OCI-LY7 (cell line): ENCODE measurements at regions of chr13 and their contacts with region 1.

Region 1: GRCh38 chr13:98445340-98446233 is 131.3 kb downstream of the STK24 start:
- DNase-seq: peak; percentile 67
- H3K4me3 ChIP-seq: no peak overlapping the region
- H3K27ac ChIP-seq: no peak overlapping the region
- H3K4me1 ChIP-seq: peaks cover 20% of the 10 kb centered on the region
- CTCF ChIP-seq: peak; percentile 75

Region 2: DNA sequence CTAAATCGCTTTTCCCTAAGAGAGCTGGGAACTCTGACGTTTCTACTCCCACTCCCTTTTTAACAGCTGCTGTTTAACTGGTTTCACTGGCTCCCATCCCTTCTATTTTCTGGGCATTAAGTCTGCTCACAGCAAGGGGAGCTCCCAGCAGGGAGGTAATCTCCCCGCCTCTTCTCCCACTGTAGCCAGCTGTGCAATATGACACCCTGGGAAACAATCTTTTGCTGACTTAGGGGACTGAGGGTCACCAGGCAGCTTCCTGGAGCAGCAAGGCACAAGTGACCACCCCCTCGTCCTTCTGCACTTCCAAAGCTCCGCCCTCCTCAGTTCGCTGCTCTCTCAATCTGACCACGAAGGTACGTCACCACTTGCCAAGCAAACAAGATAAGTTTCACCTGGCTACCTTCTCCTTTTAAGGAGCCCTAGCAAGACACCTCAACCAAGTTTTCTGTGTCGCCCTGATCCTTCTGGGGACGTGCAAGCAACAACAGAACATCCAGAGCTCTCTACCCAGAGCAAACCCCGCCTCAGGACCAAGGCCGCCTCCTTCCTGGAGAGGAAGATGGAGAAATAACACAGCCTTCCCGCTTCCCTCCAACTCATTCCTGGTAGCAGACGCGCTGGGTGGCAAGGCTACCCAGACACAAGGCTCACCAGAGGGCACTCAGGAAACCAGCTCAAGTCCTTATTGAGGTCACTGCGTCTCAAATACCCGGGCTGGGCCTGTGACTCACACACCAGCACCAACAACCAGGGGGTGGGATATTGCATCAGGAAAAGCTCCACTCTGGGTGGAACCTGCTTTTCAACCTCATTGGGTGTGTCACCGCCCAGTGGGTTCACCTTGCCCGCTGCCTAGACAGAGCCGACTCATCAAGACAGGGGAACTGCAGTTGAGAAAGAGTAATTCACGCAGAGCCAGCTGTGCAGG is 39.0 kb after region 1 on chr13:
- CTCF ChIA-PET with region 1: interaction called, 3 read pairs
- POLR2A ChIA-PET with region 1: no interaction called
- intact Hi-C with region 1: loop called (anchors 5 kb)
- DNase-seq: no peak
- H3K4me3 ChIP-seq: no peak overlapping the region
- H3K27ac ChIP-seq: no peak overlapping the region
- H3K4me1 ChIP-seq: peaks cover 47% of the 10 kb centered on the region
- CTCF ChIP-seq: no peak

Region 3: DNA sequence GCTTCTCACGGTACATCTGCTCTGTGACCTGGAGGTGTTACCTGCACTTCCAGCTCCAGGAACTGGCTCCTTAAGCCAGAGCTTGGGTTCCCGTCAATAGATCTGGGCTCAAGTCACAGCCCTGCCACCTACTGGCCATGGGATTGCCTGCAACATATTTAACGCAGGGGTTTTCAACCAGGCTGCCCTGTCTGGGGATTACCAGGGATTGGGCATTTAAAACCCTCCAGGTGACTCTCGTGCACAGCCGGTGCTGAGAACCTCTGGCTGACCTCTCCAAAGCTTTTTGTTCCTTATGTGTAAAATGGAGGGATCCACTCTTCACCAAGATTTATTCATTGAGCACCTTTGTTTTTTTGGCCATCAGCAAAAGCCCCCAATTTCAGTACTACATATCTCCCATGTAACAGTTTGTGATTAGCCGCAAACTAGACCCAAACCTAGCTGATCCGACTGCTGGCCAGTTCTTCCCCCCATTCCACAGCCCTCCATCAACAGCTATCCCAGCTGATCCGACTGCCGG is 207.9 kb after region 1 on chr13:
- CTCF ChIA-PET with region 1: interaction called, 6 read pairs
- POLR2A ChIA-PET with region 1: interaction called, 3 read pairs
- intact Hi-C with region 1: loop called (anchors 1 kb)
- DNase-seq: peak; percentile 67
- H3K4me3 ChIP-seq: no peak overlapping the region
- H3K27ac ChIP-seq: no peak overlapping the region
- H3K4me1 ChIP-seq: no peaks in the 10 kb centered on the region
- CTCF ChIP-seq: peak; percentile 78

Region 4: DNA sequence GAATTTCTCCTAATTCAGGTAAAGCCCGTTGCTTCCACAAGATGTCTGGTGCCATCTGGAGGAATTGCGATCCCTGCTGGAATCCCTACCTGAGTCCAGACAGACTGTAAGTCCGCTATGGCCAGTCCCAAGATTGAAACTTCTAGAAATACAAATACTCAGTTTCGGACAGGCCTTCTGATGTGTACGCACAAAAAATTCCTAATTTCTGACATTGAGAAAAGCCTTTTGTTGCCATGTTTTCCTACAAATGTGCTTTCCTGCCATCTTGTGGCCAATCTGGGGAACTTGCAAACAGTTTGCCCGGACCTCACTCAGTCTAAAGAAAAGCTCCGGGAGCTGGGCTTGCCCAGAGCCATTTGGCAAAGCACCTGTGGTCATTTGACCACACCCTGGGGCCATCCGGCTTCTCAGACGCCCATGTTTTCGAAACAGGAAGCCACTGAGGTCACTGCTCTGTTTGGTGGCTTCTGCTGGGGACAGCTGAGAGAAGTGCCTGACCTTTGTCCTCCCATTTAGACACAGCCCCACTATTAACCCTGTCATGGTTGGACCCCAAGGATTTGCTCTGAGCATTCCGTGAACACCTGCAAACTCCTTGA is 227.5 kb after region 1 on chr13:
- CTCF ChIA-PET with region 1: no interaction called
- POLR2A ChIA-PET with region 1: no interaction called
- intact Hi-C with region 1: loop called (anchors 1 kb)
- DNase-seq: peak; percentile 56
- H3K4me3 ChIP-seq: no peak overlapping the region
- H3K27ac ChIP-seq: no peak overlapping the region
- H3K4me1 ChIP-seq: no peaks in the 10 kb centered on the region
- CTCF ChIP-seq: peak; percentile 82

Region 5: GRCh38 chr13:98826146-98826545 is 380.6 kb after region 1 on chr13:
- CTCF ChIA-PET with region 1: no interaction called
- POLR2A ChIA-PET with region 1: no interaction called
- intact Hi-C with region 1: loop called (anchors 5 kb)
- DNase-seq: peak; percentile 1
- H3K4me3 ChIP-seq: peak overlapping the region; percentile 23
- H3K27ac ChIP-seq: peak overlapping the region; percentile 13
- H3K4me1 ChIP-seq: peaks cover 15% of the 10 kb centered on the region
- CTCF ChIP-seq: no peak

Region 6: GRCh38 chr13:98842864-98843481 is 397.4 kb after region 1 on chr13:
- CTCF ChIA-PET with region 1: no interaction called
- POLR2A ChIA-PET with region 1: no interaction called
- intact Hi-C with region 1: loop called (anchors 5 kb)
- DNase-seq: peak; percentile 71
- H3K4me3 ChIP-seq: no peak overlapping the region
- H3K27ac ChIP-seq: no peak overlapping the region
- H3K4me1 ChIP-seq: peaks cover 2% of the 10 kb centered on the region
- CTCF ChIP-seq: peak; percentile 80